ENCODE measurements at regions of chr20 and their contacts with region 1.

Region 1: GRCh38 chr20:46013826-46014516 is 5.3 kb downstream of the MMP9 start:
- DNase-seq: peak; percentile 53 to 69 (median 56)
- H3K4me3 ChIP-seq: peak overlapping the region; percentile 54
- H3K4me3 Mint-ChIP-seq: peak overlapping the region; percentile 21 to 70 (median 54)
- H3K27ac ChIP-seq: no peak overlapping the region
- H3K27ac Mint-ChIP-seq: peak overlapping the region in 3 of 8 donors; percentile 9 to 48 (median 47)
- H3K4me1 ChIP-seq: peaks cover 39% of the 10 kb centered on the region
- H3K4me1 Mint-ChIP-seq: peaks cover 38 to 54% (median 39%) of the 10 kb centered on the region in 3 donors
- H3K27me3 ChIP-seq: peaks cover 48% of the 10 kb centered on the region
- H3K27me3 Mint-ChIP-seq: peaks cover 39 to 80% of the 10 kb centered on the region in 2 donors

Region 2: GRCh38 chr20:45798935-45799642 is 214.9 kb before region 1 on chr20:
- CTCF ChIA-PET with region 1: interaction called, 13 read pairs
- POLR2A ChIA-PET with region 1: no interaction called
- DNase-seq: peak; percentile 40 to 73 (median 49)
- H3K4me3 ChIP-seq: no peak overlapping the region
- H3K4me3 Mint-ChIP-seq: no peak overlapping the region
- H3K27ac ChIP-seq: no peak overlapping the region
- H3K27ac Mint-ChIP-seq: peak overlapping the region; percentile 10 to 94 (median 66)
- H3K4me1 ChIP-seq: no peaks in the 10 kb centered on the region
- H3K4me1 Mint-ChIP-seq: peaks cover 10% of the 10 kb centered on the region in 3 donors
- H3K27me3 ChIP-seq: no peaks in the 10 kb centered on the region
- H3K27me3 Mint-ChIP-seq: no peaks in the 10 kb centered on the region

Region 3: GRCh38 chr20:45905505-45906079 is 108.4 kb before region 1 on chr20:
- CTCF ChIA-PET with region 1: no interaction called
- POLR2A ChIA-PET with region 1: no interaction called
- DNase-seq: no peak
- H3K4me3 ChIP-seq: no peak overlapping the region
- H3K4me3 Mint-ChIP-seq: no peak overlapping the region
- H3K27ac ChIP-seq: no peak overlapping the region
- H3K27ac Mint-ChIP-seq: no peak overlapping the region
- H3K4me1 ChIP-seq: peaks cover under 1% of the 10 kb centered on the region
- H3K4me1 Mint-ChIP-seq: peaks cover 1 to 2% (median 2%) of the 10 kb centered on the region in 3 donors
- H3K27me3 ChIP-seq: no peaks in the 10 kb centered on the region
- H3K27me3 Mint-ChIP-seq: no peaks in the 10 kb centered on the region

Region 4: GRCh38 chr20:45987108-45987780 is 26.7 kb before region 1 on chr20:
- CTCF ChIA-PET with region 1: interaction called, 35 read pairs
- POLR2A ChIA-PET with region 1: interaction called, 3 read pairs
- DNase-seq: peak; percentile 61 to 80 (median 67)
- H3K4me3 ChIP-seq: no peak overlapping the region
- H3K4me3 Mint-ChIP-seq: no peak overlapping the region
- H3K27ac ChIP-seq: no peak overlapping the region
- H3K27ac Mint-ChIP-seq: no peak overlapping the region
- H3K4me1 ChIP-seq: no peaks in the 10 kb centered on the region
- H3K4me1 Mint-ChIP-seq: no peaks in the 10 kb centered on the region
- H3K27me3 ChIP-seq: no peaks in the 10 kb centered on the region
- H3K27me3 Mint-ChIP-seq: peaks cover 14% of the 10 kb centered on the region in 2 donors

Region 5: GRCh38 chr20:45998761-45999160 is 15.2 kb before region 1 on chr20:
- CTCF ChIA-PET with region 1: interaction called, 21 read pairs
- POLR2A ChIA-PET with region 1: no interaction called
- DNase-seq: no peak
- H3K4me3 ChIP-seq: no peak overlapping the region
- H3K4me3 Mint-ChIP-seq: peak overlapping the region in 4 of 7 donors; percentile 6 to 27 (median 21)
- H3K27ac ChIP-seq: no peak overlapping the region
- H3K27ac Mint-ChIP-seq: peak overlapping the region in 7 of 8 donors; percentile 2 to 71 (median 47)
- H3K4me1 ChIP-seq: peaks cover 54% of the 10 kb centered on the region
- H3K4me1 Mint-ChIP-seq: peaks cover 31 to 54% (median 48%) of the 10 kb centered on the region in 3 donors
- H3K27me3 ChIP-seq: no peaks in the 10 kb centered on the region
- H3K27me3 Mint-ChIP-seq: peaks cover 11 to 22% of the 10 kb centered on the region in 2 donors

Region 6: GRCh38 chr20:46174469-46175128 is 160.6 kb after region 1 on chr20:
- CTCF ChIA-PET with region 1: interaction called, 28 read pairs
- POLR2A ChIA-PET with region 1: no interaction called
- DNase-seq: peak; percentile 48 to 68 (median 54)
- H3K4me3 ChIP-seq: no peak overlapping the region
- H3K4me3 Mint-ChIP-seq: peak overlapping the region in 2 of 7 donors; percentile 15 to 48
- H3K27ac ChIP-seq: no peak overlapping the region
- H3K27ac Mint-ChIP-seq: peak overlapping the region in 1 of 8 donors; percentile 67
- H3K4me1 ChIP-seq: no peaks in the 10 kb centered on the region
- H3K4me1 Mint-ChIP-seq: peaks cover 0 to 7% (median 0%) of the 10 kb centered on the region in 3 donors
- H3K27me3 ChIP-seq: peaks cover 28% of the 10 kb centered on the region
- H3K27me3 Mint-ChIP-seq: peaks cover 38 to 74% of the 10 kb centered on the region in 2 donors

Measured in CD8-positive, alpha-beta memory T cell (primary cell).